ENCODE measurements at regions of chr15 and their contacts with region 1.

Region 1: DNA sequence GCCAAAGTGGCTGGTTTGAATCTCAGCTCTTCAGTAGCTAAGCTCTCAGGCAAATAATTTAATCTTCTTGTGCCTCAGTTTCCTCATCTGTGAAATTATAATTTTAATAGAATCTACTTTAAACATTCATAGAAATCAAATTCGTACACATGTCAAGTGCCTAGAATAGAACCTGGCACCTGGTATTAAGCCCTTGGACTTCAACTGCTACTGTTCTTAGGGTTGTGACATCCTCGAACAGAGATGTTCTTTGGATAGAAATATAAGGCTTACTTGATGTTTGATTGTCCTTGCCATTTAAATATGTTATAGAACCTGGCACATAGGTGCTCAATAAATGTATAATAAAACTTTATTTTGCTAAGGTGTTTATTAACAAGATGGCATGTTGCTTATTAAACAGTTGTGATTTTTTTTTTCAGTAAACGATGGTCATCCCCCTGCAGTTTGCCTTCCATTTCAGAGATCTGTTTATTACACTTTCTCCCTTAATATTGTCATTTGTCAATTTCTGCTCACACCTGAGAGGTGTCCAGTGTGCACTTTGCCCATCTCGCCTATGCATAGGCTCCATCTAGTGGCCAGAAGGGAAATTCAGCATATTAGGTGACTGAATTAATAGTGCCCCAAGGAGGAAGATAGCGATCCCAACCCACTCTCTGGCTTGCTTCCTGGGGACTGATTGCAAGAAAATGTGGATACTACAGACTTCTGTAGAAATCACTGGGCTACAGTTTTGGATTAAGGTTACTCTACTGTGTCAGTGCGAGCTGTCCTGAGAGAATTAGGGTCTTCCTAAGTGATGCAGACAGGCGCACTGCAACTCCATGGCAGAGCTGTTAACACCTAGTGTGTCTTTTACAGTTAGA is 10.7 kb downstream of the IGF1R start:
- DNase-seq: peak; percentile 54
- ATAC-seq: peak; percentile 88
- H3K4me3 Mint-ChIP-seq: no peak overlapping the region
- H3K27ac Mint-ChIP-seq: no peak overlapping the region
- H3K4me1 Mint-ChIP-seq: peaks cover 2% of the 10 kb centered on the region
- H3K27me3 Mint-ChIP-seq: peaks cover 16% of the 10 kb centered on the region

Region 2: DNA sequence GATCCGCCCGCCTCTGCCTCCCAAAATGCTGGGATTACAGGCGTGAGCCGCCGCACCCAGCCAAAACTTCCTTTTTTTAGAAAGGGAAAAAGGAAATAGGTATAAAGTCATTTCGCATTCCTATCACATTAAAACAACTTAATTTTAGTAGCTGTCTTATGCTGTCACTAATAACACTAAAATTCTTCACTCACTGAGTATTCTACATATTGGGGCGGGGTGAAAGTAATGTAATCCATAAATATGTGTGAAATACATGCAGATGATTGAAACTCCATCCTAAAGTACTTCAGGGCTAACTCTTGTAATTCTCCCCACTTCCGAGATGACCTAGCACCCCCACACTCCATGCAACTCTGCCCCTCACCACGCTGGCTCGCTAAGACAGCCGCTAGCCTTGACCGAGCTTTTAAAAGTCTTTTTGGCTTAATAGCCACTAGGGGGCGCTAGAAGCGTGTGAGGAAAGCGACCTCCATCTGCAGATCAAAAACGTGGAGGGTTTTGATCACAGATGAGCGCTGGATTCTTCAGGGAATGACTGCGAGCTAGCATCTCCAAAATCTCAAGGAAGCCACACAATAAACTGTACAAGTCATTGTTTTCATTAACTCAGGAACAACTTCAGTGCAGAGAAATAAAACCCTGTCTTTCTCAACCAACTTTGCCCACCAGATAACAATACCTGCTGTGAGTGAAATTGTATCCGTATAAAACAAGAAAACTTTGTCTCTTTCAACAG is 140.1 kb before region 1 on chr15:
- CTCF ChIA-PET with region 1: interaction called, 72 read pairs
- POLR2A ChIA-PET with region 1: no interaction called
- DNase-seq: peak; percentile 63
- ATAC-seq: peak; percentile 86
- H3K4me3 Mint-ChIP-seq: no peak overlapping the region
- H3K27ac Mint-ChIP-seq: no peak overlapping the region
- H3K4me1 Mint-ChIP-seq: peaks cover 7% of the 10 kb centered on the region
- H3K27me3 Mint-ChIP-seq: peaks cover 4% of the 10 kb centered on the region

Region 3: GRCh38 chr15:98568382-98569017 is 90.6 kb before region 1 on chr15:
- CTCF ChIA-PET with region 1: no interaction called
- POLR2A ChIA-PET with region 1: no interaction called
- DNase-seq: no peak
- ATAC-seq: no peak
- H3K4me3 Mint-ChIP-seq: no peak overlapping the region
- H3K27ac Mint-ChIP-seq: no peak overlapping the region
- H3K4me1 Mint-ChIP-seq: no peaks in the 10 kb centered on the region
- H3K27me3 Mint-ChIP-seq: peaks cover 17% of the 10 kb centered on the region

Measured in activated CD8-positive, alpha-beta T cell treated with anti-CD3 and anti-CD28 coated beads, Interleukin-2, amount 10 ng/mL, durations not matched to agents 7 days and 5 days (primary cell).